Activated CD4-positive, alpha-beta memory T cell treated with anti-CD3 and anti-CD28 coated beads for 36 hours (primary cell): ENCODE measurements at regions of chr6 and their contacts with region 1.

Region 1: DNA sequence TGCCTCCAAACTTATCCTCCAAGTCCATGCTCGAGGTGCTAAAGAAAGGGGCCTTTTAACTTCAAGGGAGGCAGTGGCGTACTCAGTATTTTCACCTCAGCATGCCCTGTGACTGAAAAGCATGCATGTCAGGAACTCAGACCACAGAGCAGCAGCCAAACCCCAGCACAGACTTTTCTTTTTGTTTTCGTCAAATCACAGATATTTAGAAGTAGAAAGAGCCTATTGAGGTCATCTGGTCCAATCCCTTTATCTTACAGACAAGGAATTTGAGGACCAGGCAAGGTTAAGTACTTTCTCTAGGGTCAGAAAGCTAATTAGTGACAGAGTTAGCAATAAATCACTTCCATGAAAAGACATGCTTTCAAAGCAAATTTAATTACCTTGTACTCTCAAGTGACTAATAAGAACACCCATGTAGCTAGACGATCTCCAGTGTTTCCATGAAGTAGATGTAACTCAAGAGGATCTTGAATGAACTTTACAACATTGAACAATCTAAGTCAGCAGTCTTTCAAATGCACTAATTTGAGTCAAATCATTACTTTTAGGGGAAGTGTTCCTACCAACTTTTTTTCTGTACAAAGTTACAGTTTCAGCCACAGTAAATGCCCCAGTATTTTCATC is 35.9 kb downstream of the MOXD1 start:
- DNase-seq: peak; percentile 11
- H3K4me3 Mint-ChIP-seq: no peak overlapping the region
- H3K27ac Mint-ChIP-seq: no peak overlapping the region
- H3K4me1 Mint-ChIP-seq: peaks cover 12% of the 10 kb centered on the region
- H3K27me3 Mint-ChIP-seq: peaks cover 40% of the 10 kb centered on the region

Region 2: GRCh38 chr6:132025468-132025867 is 339.9 kb before region 1 on chr6:
- CTCF ChIA-PET with region 1: no interaction called
- POLR2A ChIA-PET with region 1: no interaction called
- intact Hi-C with region 1: no loop called
- DNase-seq: no peak
- H3K4me3 Mint-ChIP-seq: no peak overlapping the region
- H3K27ac Mint-ChIP-seq: no peak overlapping the region
- H3K4me1 Mint-ChIP-seq: no peaks in the 10 kb centered on the region
- H3K27me3 Mint-ChIP-seq: peaks cover 4% of the 10 kb centered on the region

Region 3: GRCh38 chr6:132344811-132345210 is 20.6 kb before region 1 on chr6:
- CTCF ChIA-PET with region 1: no interaction called
- POLR2A ChIA-PET with region 1: no interaction called
- intact Hi-C with region 1: no loop called
- DNase-seq: no peak
- H3K4me3 Mint-ChIP-seq: no peak overlapping the region
- H3K27ac Mint-ChIP-seq: no peak overlapping the region
- H3K4me1 Mint-ChIP-seq: no peaks in the 10 kb centered on the region
- H3K27me3 Mint-ChIP-seq: peaks cover 6% of the 10 kb centered on the region

Region 4: GRCh38 chr6:132401120-132401945 is 35.9 kb after region 1 on chr6 and contains the start of gene MOXD1:
- CTCF ChIA-PET with region 1: no interaction called
- POLR2A ChIA-PET with region 1: no interaction called
- intact Hi-C with region 1: loop called (anchors 1 kb)
- DNase-seq: no peak
- H3K4me3 Mint-ChIP-seq: peak within 1 kb of the TSS; percentile 22
- H3K27ac Mint-ChIP-seq: no peak within 1 kb of the TSS
- H3K4me1 Mint-ChIP-seq: peaks cover 12% of the 10 kb centered on the region
- H3K27me3 Mint-ChIP-seq: peaks cover 41% of the 10 kb centered on the region
- total RNA-seq, gene MOXD1: not detected

Region 5: GRCh38 chr6:132490024-132490423 is 124.6 kb after region 1 on chr6:
- CTCF ChIA-PET with region 1: no interaction called
- POLR2A ChIA-PET with region 1: no interaction called
- intact Hi-C with region 1: loop called (anchors 10 kb)
- DNase-seq: no peak
- H3K4me3 Mint-ChIP-seq: no peak overlapping the region
- H3K27ac Mint-ChIP-seq: no peak overlapping the region
- H3K4me1 Mint-ChIP-seq: peaks cover 28% of the 10 kb centered on the region
- H3K27me3 Mint-ChIP-seq: no peaks in the 10 kb centered on the region